CD4-positive, alpha-beta memory T cell (primary cell): ENCODE measurements at regions of chr1 and their contacts with region 1.

Region 1: DNA sequence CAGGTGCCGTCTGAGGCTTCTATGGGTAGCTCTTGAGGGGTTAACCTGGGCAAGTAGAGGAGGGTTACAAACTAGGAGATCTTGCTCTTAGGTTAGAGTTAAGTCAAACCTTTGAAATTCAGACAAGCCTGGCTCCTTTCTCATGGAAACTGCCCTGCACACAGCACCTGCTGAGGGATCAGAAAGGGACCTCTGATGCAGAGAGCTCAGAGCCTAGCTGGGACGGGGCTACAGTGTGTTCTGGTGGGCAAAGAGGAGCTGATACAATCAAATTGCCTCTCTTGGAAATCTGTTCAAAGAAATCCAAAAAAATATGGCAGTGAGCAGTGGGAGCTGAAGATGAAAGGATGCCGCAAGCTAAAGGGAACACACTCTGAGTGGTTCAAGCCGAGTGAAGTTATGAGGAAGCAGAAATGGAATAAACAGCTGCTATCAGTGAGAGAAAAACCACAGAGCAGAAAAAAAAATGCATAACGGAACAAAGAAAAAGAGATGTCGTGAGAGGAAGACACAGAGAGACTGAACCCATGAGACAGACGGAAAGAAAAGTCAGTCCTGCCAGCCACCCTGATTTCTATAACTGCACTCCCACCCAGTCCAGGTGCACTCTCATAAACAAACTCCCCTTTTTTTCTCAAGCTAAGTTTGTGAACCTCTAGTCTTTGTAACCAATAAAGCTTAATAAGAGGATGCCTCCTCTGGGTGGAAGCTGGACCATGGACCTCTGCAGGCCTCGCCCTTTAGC is 26.6 kb downstream of the PAFAH2 start:
- DNase-seq: peak; percentile 24 to 48 (median 40)
- H3K4me3 ChIP-seq: no peak overlapping the region
- H3K4me3 Mint-ChIP-seq: peak overlapping the region; percentile 14 to 77 (median 59)
- H3K27ac ChIP-seq: peak overlapping the region; percentile 50
- H3K27ac Mint-ChIP-seq: peak overlapping the region; percentile 49 to 90 (median 80)
- H3K4me1 ChIP-seq: peaks cover 13% of the 10 kb centered on the region
- H3K4me1 Mint-ChIP-seq: peaks cover 29 to 32% (median 31%) of the 10 kb centered on the region in 4 donors
- H3K27me3 ChIP-seq: no peaks in the 10 kb centered on the region
- H3K27me3 Mint-ChIP-seq: no peaks in the 10 kb centered on the region

Region 2: GRCh38 chr1:25905680-25906643 is 65.3 kb before region 1 on chr1 and contains the start of gene STMN1:
- CTCF ChIA-PET with region 1: no interaction called
- POLR2A ChIA-PET with region 1: interaction called, 10 read pairs
- intact Hi-C with region 1: no loop called
- DNase-seq: peak; percentile 74 to 88 (median 77)
- H3K4me3 ChIP-seq: peak within 1 kb of the TSS; percentile 71 to 93
- H3K4me3 Mint-ChIP-seq: peak within 1 kb of the TSS; percentile 89 to 96 (median 92)
- H3K27ac ChIP-seq: peak within 1 kb of the TSS; percentile 54
- H3K27ac Mint-ChIP-seq: peak within 1 kb of the TSS; percentile 87 to 98 (median 96)
- H3K4me1 ChIP-seq: peaks cover 26% of the 10 kb centered on the region
- H3K4me1 Mint-ChIP-seq: peaks cover 14 to 31% (median 21%) of the 10 kb centered on the region in 4 donors
- H3K27me3 ChIP-seq: no peaks in the 10 kb centered on the region
- H3K27me3 Mint-ChIP-seq: no peaks in the 10 kb centered on the region
- total RNA-seq, gene STMN1: 34.5 to 37.1 TPM

Region 3: GRCh38 chr1:25922056-25922969 is 48.9 kb before region 1 on chr1:
- CTCF ChIA-PET with region 1: interaction called, 4 read pairs
- POLR2A ChIA-PET with region 1: interaction called, 14 read pairs
- intact Hi-C with region 1: no loop called
- DNase-seq: peak; percentile 46 to 60 (median 57)
- H3K4me3 ChIP-seq: peak overlapping the region; percentile 17 to 54
- H3K4me3 Mint-ChIP-seq: peak overlapping the region; percentile 85 to 92 (median 88)
- H3K27ac ChIP-seq: no peak overlapping the region
- H3K27ac Mint-ChIP-seq: peak overlapping the region; percentile 49 to 90 (median 65)
- H3K4me1 ChIP-seq: peaks cover 36% of the 10 kb centered on the region
- H3K4me1 Mint-ChIP-seq: peaks cover 19 to 33% (median 23%) of the 10 kb centered on the region in 4 donors
- H3K27me3 ChIP-seq: no peaks in the 10 kb centered on the region
- H3K27me3 Mint-ChIP-seq: peaks cover 2 to 3% of the 10 kb centered on the region in 2 donors

Region 4: DNA sequence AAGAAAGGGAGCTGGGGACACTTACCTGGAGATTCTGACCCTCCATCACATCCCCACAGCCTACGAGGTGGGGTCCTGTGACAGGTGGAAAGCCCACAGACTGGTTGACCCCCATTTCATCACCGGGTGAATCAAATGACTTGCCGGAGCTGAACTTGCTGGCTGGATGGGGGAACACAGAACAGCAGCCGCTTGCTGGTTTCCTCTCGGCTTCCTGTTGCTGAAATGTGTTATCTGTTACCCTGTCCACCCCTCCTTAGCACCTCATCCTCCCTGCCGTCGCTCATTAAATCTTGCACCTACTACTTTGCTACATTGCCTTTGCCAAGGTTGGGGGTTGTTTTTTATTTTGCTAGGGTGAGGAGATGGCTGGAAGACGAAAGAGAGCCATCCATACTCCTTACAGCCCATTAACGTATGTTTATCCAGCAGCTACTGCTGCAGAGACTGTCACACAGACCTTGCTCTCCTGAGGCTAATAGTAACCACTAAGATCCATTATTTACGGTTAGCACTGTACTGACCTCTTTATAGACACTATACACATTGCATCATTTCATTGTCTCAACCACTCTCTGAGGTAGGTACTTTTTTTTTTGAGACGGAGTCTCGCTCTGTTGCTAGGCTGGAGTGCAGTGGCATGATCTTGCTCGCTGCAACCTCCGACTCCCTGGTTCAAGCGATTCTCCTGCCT is 19.6 kb after region 1 on chr1:
- CTCF ChIA-PET with region 1: interaction called, 9 read pairs
- POLR2A ChIA-PET with region 1: interaction called, 27 read pairs
- intact Hi-C with region 1: loop called (anchors 2 kb)
- DNase-seq: peak; percentile 36 to 50 (median 44)
- H3K4me3 ChIP-seq: peak overlapping the region; percentile 26 to 62
- H3K4me3 Mint-ChIP-seq: peak overlapping the region; percentile 79 to 92 (median 86)
- H3K27ac ChIP-seq: peak overlapping the region; percentile 67
- H3K27ac Mint-ChIP-seq: peak overlapping the region; percentile 71 to 97 (median 85)
- H3K4me1 ChIP-seq: peaks cover 46% of the 10 kb centered on the region
- H3K4me1 Mint-ChIP-seq: peaks cover 29 to 57% (median 45%) of the 10 kb centered on the region in 4 donors
- H3K27me3 ChIP-seq: no peaks in the 10 kb centered on the region
- H3K27me3 Mint-ChIP-seq: no peaks in the 10 kb centered on the region